Right ventricle myocardium inferior (tissue), 1 donor: ENCODE measurements at regions of chr6 and their contacts with region 1.

Region 1: DNA sequence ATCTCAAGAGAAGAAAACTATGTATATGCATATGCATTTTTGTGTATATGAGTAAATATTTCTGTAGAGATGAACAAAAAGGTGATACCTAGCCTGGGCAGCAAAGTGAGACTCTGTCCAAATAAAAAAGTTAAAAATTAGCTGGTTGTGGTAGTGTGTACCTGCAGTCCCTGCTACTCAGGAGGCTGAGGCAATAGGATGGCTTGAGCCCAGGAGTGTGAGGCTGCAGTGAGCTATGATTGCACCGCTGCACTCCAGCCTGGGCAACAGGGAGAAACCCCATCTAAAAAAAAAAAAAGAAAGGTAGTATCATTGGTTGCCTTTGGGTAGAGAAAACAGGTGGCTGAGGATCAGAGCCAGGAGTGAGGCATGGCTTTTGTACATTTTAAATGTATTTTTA is 50.9 kb downstream of the KLHL31 start:
- DNase-seq: no peak
- ATAC-seq: no peak

Region 2: DNA sequence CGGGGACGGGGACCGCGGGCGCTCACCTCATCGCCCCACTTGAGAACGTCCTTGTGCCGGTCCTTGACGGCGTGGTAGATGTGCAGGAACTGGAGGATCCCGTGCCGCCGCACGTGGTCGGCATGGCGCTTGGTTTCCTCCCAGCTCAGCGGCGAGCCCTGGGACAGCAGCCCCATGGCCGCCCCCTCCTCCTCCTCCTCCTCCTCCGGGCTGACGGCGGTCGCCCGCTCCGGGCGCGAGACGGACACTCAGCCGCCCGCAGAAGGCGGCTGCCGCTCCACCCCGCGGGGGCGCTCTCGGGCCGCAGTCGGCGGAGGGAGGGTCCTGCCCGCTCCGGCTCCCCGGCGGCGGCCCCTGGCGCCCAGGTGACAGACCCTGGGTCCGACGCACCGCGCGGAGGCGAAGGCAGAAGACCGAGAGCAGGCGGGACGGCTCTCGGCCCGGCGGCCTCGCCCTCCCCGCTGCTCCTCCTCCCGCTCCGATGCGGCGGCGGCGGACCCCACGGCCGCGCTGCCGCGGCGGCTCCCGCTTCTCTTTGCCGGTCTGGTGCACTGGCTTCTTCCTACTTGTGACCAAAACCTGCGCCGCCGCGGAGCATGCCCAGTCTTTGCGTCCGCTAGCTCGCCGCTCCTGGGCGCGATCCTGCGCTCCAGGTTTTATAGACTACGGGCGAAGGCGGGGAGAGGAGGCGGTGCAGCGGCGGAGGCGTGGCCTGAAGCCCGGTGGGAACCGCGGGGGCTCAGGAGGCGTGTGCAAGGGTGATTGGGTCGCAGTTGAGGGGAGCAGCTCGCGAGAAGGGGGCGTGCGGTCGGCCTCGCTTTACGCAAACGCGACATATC is 70.0 kb before region 1 on chr6 and contains the start of gene GCLC:
- intact Hi-C with region 1: no loop called
- DNase-seq: peak; percentile 98
- ATAC-seq: peak; percentile 84
- total RNA-seq, gene GCLC: 26.7 TPM

Region 3: DNA sequence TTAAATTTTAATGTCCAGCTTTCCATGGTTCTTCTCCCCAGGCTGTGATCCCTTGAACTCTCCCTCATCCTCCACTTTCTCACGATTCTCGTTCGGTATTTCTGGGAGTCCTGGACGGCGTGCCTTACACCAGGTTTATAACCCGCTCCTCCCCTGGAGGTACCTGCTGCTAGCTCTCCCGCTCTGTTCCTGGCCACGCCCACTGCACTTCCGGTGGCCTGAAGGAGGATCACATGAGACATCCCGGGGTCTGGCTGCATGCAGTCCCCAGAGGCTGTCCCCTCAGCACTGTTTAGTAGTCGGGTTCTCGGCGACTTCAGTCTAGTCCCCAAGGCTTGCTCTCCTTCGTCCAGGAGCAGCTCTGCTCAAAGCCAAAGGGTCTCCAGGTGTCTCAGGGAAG is 41.4 kb before region 1 on chr6:
- intact Hi-C with region 1: loop called (anchors 1 kb)
- DNase-seq: no peak
- ATAC-seq: no peak

Region 4: DNA sequence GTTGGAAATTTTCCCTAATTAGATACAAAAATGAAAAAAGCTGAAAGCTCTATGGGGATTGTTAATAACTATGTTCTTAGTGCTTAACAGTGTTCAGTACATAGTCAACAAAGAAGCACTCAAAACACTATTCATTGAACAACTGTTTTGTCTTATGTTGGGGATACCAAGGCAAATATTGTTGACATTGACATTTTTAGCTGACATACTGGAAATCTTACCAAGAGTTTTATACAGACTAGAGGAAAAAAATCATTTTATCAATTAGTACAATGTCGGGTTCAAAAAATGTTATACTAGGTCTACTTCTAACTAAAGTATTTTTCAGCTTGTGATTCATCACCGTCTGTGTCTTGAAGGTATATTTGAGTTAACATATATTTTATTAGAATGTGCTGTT is 10.6 kb after region 1 on chr6:
- intact Hi-C with region 1: loop called (anchors 1 kb)
- DNase-seq: no peak
- ATAC-seq: no peak

Region 5: DNA sequence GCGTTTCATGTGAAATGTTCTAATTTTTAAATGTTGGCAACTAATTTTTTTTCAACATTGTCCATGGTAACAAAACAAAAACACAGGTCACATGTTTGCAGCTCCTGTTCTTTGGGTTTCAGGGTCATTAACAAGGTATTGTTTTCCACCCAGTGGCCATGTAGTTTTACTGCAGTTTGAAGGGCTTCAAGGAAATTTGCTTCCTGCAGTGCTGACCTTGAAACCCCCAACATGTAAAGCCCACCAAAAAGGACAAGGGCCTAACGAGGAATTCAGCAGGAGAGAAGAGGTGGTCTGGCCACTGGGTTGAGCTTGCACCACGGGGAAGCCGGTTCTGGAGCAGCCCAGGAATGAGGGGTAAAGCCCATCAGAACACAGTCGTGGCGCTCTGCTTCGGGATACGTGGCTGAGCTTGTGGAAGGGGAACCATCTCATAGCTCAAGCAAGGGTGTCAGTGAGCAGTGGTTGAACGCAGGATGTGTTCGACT is 64.8 kb after region 1 on chr6:
- intact Hi-C with region 1: no loop called
- DNase-seq: no peak
- ATAC-seq: peak; percentile 64

Region 6: GRCh38 chr6:53967415-53967814 is 352.7 kb after region 1 on chr6:
- intact Hi-C with region 1: no loop called
- DNase-seq: no peak
- ATAC-seq: no peak